Prostate gland (tissue), 2 donors: ENCODE measurements at regions of chr4 and their contacts with region 1.

Region 1: DNA sequence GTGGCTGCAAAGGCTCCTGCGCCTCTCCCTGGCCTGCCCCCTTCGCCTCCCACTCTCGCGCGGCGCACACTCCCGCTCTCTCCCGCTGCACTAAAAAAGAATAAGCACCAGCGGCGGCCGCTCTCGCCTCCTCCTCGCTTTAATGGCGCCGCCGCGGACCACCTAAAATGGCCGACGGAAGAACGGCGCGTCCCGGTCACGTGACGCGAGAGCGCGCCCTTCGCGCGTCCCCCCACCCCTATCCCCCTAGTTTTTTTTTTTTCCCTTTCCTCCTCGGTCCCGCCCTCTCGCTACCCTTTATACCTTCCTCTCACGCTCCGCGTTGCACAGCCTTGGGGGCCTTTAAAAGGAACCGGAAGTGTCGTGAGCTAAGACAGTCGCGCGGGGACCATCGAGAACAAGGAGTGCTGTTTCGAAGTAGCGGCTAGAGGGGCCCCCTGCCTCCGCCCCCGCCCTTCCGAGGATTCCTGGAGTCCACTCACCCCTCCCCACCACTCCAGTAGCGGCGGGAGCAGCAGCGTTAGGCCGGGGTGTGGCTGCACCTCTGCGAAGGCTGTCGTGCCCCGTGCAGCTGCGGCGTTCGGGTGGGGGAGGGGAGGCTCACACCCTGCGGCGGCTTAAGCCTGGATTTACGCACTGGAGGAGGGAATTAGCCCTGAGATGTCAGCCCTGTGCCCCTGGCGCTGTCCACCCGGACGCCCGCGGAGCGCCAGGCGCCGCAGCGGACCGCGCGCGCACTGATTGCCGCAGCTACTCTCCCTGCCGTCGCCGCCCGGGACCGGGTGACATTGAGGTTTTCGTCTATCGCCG is at the start of gene HNRNPD:
- DNase-seq: peak; percentile 98
- H3K4me3 ChIP-seq: peak within 1 kb of the TSS; percentile 97 to 100
- H3K27ac ChIP-seq: peak within 1 kb of the TSS; percentile 99 to 100
- H3K4me1 ChIP-seq: peaks cover 2% of the 10 kb centered on the region
- H3K27me3 ChIP-seq: no peaks in the 10 kb centered on the region
- CTCF ChIP-seq: peak in 3 of 4 experiments; percentile 9 to 35 (median 29)
- POLR2A ChIP-seq: peak; percentile 66
- total RNA-seq, gene HNRNPD: 48.7 to 87.3 TPM

Region 2: GRCh38 chr4:82284858-82285805 is 88.9 kb before region 1 on chr4:
- intact Hi-C with region 1: loop called (anchors 5 kb)
- DNase-seq: peak; percentile 99
- H3K4me3 ChIP-seq: peak overlapping the region; percentile 23 to 37
- H3K27ac ChIP-seq: peak overlapping the region; percentile 55 to 65
- H3K4me1 ChIP-seq: no peaks in the 10 kb centered on the region
- H3K27me3 ChIP-seq: no peaks in the 10 kb centered on the region
- CTCF ChIP-seq: peak; percentile 73 to 94 (median 88)
- POLR2A ChIP-seq: peak; percentile 21

Region 3: GRCh38 chr4:82428969-82429727 is 55.1 kb after region 1 on chr4:
- intact Hi-C with region 1: loop called (anchors 2 kb)
- DNase-seq: peak; percentile 90
- H3K4me3 ChIP-seq: peak overlapping the region; percentile 90 to 96
- H3K27ac ChIP-seq: peak overlapping the region; percentile 98
- H3K4me1 ChIP-seq: peaks cover 3% of the 10 kb centered on the region
- H3K27me3 ChIP-seq: no peaks in the 10 kb centered on the region
- CTCF ChIP-seq: peak; percentile 95 to 100 (median 99)
- POLR2A ChIP-seq: peak; percentile 79

Region 4: DNA sequence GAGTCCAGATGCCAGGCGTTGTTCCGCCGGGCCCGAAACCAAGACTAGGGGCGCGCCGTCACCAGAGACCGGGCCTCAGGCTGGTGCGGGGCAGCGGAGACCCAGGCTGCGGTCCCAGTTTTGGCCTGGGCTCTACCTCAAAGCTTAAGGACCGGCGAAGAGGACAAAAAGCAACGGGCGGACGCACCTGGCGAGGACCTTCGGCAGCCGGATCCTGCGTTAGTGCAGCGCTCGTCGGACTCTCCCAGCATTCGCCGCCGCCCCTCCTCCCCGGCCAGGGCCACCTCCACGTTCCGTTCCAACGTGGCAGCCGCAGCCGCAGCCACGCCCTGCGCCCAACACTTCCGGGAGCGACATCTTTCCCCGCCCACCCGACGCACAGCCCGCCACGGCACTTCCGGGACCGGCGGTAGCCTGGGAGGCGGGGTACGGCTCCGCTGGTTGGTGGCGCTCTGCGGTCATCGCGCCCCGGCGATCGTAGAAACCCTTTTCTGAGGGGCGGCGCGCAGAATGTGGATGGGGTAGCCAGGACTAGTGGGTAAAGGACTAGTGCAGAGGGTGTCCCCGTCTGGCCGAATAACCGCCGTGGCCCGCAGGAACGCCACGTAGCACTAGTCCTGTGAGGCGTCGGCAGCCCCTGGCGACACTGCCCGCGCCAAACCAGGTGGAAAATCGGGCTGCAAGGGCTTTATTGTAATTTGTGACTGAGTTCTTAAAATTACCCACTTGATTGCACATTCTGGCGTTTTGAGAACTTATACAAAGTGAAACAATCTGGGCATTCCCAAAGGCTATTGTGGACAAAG is 517.1 kb after region 1 on chr4 and contains the start of gene SEC31A:
- intact Hi-C with region 1: loop called (anchors 5 kb)
- DNase-seq: peak; percentile 96
- H3K4me3 ChIP-seq: peak within 1 kb of the TSS; percentile 56 to 79
- H3K27ac ChIP-seq: peak within 1 kb of the TSS; percentile 93 to 98
- H3K4me1 ChIP-seq: no peaks in the 10 kb centered on the region
- H3K27me3 ChIP-seq: no peaks in the 10 kb centered on the region
- CTCF ChIP-seq: peak in 2 of 4 experiments; percentile 11 to 31
- POLR2A ChIP-seq: peak; percentile 95
- total RNA-seq, gene SEC31A: 191 to 196 TPM

Region 5: DNA sequence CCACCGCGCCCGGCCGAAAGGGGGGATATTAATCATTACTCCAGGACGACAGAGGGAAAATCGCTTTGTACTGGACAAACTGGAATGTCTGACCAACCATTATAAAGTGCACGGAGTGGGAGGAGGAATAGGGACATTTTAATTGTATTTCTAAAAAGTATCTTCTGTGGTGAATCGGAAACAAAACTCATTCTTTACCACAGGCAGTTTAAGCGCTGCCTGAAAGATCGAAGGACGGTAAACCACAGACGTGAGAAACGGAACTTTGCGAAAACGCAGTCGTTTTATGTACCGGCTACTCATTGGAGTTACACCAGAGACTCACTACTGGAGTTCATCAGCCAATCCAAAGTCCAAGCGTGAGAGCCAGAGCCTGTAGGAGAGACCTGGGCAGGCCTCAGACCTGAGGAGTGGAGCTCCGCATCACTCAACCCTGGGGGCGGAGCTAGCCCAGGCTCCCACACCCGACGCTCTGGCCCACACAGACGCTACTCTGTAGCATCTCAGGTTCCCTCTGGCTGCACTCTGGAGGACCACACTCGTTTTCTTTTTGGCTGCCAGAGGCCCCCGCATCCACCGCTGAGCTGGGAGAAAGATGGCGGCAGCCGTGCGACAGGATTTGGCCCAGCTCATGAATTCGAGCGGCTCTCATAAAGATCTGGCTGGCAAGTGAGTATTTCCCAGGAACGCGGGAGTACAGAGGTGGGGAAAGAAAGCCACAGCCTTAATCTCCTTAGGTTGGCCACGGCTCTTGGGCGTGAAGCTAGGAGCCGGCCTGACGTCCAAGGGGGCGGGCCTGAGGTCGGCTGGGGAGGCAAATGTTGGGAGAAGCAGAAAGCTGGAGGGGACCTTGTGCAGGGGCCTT is 660.8 kb after region 1 on chr4 and contains the start of gene COPS4:
- intact Hi-C with region 1: loop called (anchors 10 kb)
- DNase-seq: peak; percentile 99
- H3K4me3 ChIP-seq: peak within 1 kb of the TSS; percentile 56 to 58
- H3K27ac ChIP-seq: peak within 1 kb of the TSS; percentile 85 to 87
- H3K4me1 ChIP-seq: no peaks in the 10 kb centered on the region
- H3K27me3 ChIP-seq: no peaks in the 10 kb centered on the region
- CTCF ChIP-seq: peak in 3 of 4 experiments; percentile 38 to 75 (median 69)
- POLR2A ChIP-seq: peak; percentile 82
- total RNA-seq, gene COPS4: 50.5 to 56.9 TPM

Region 6: GRCh38 chr4:83284193-83285054 is 910.4 kb after region 1 on chr4 and contains the start of gene COQ2:
- intact Hi-C with region 1: loop called (anchors 5 kb)
- DNase-seq: peak; percentile 93
- H3K4me3 ChIP-seq: peak within 1 kb of the TSS; percentile 66 to 71
- H3K27ac ChIP-seq: peak within 1 kb of the TSS; percentile 93 to 95
- H3K4me1 ChIP-seq: peaks cover 4% of the 10 kb centered on the region
- H3K27me3 ChIP-seq: no peaks in the 10 kb centered on the region
- CTCF ChIP-seq: peak in 3 of 4 experiments; percentile 40 to 65 (median 54)
- POLR2A ChIP-seq: peak; percentile 61
- total RNA-seq, gene COQ2: 12.8 to 13.1 TPM